Cardiac septum (tissue), 1 donor: ENCODE measurements at regions of chr22 and their contacts with region 1.

Region 1: GRCh38 chr22:21712894-21713712 is 22.5 kb downstream of the YPEL1 start:
- DNase-seq: peak; percentile 81

Region 2: DNA sequence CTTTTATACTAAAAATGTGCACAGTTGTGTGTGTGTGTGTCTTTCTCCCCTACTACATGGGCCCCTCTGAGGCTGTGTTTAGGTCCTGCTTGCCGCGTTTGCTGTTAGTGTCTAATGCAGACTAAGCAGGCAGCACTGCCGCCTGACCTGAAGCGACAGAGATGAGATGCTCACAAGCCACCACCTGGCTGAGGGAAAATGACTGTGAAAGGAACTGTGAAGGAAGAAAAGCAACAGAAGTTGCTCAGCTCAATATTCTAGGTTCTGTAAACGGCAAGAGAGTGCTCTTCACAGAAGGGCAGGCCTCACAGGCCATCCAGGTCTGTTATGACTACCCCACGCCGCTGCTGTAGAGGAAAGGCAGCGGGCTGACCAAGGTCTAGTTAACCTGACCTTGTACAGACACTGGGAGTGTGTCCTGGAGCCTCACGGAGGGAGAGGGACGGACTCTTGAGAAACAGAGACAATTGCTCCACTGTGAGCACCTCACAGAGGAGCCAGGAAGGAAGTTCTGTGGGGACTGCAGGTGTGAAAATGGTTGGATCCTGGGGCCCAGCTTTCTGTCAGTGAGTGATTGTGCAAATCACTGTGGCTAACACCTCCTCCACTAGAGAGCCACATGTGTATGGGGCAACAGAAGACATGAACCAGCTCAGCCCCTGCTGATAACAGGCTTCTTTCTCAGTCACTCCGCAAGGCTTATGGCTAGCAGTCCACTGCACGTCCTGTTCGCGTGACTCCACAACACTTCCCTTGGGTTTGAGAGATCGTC is 53.8 kb after region 1 on chr22:
- intact Hi-C with region 1: loop called (anchors 10 kb)
- DNase-seq: no peak